ENCODE measurements at regions of chr13 and their contacts with region 1.

Region 1: GRCh38 chr13:51797664-51798488 is 6.1 kb downstream of the DHRS12 start:
- DNase-seq: peak; percentile 68
- H3K4me3 Mint-ChIP-seq: no peak overlapping the region
- H3K27ac Mint-ChIP-seq: no peak overlapping the region
- H3K4me1 Mint-ChIP-seq: peaks cover 39% of the 10 kb centered on the region
- H3K27me3 Mint-ChIP-seq: no peaks in the 10 kb centered on the region

Region 2: DNA sequence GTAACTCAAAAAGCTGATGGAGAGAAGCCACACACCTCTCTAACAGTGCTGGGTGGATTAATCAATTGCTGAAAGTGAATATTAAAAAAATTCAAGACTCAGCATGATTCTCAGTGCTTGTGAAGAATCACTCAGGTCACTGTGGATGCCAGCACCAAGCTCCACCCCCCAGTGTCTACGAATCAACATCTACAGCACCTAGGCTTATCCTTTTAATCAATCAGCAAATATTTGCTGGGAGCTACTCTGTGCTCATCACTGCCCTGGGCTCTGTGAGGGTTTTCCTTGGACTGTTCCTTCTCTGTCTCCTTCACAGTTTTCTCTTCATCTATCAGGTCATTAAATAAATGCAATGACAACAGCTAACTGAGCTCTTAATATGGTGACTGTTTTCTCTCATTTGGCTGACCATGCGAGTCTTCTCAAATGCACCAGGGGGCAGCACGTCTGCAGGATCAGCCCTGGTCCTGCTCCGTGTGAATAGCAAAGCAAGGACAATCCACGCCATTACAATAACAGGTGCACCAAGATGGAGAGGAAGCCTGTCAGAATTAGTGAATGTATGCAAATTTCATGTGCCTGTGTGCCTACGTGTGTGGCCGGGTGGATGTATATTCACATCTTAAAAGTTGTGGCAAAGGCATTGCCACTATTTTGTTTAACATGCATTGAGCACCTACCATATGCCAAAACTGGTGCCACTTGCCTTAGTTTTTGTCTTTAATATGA is 672.2 kb before region 1 on chr13:
- CTCF ChIA-PET with region 1: interaction called, 47 read pairs
- POLR2A ChIA-PET with region 1: interaction called, 4 read pairs
- DNase-seq: peak; percentile 60
- H3K4me3 Mint-ChIP-seq: no peak overlapping the region
- H3K27ac Mint-ChIP-seq: no peak overlapping the region
- H3K4me1 Mint-ChIP-seq: peaks cover 15% of the 10 kb centered on the region
- H3K27me3 Mint-ChIP-seq: peaks cover 27% of the 10 kb centered on the region

Region 3: GRCh38 chr13:51435002-51435578 is 362.8 kb before region 1 on chr13:
- CTCF ChIA-PET with region 1: interaction called, 63 read pairs
- POLR2A ChIA-PET with region 1: interaction called, 4 read pairs
- DNase-seq: no peak
- H3K4me3 Mint-ChIP-seq: no peak overlapping the region
- H3K27ac Mint-ChIP-seq: no peak overlapping the region
- H3K4me1 Mint-ChIP-seq: peaks cover 14% of the 10 kb centered on the region
- H3K27me3 Mint-ChIP-seq: no peaks in the 10 kb centered on the region

Region 4: GRCh38 chr13:51444922-51445321 is 353.0 kb before region 1 on chr13:
- CTCF ChIA-PET with region 1: interaction called, 50 read pairs
- POLR2A ChIA-PET with region 1: interaction called, 82 read pairs
- DNase-seq: no peak
- H3K4me3 Mint-ChIP-seq: no peak overlapping the region
- H3K27ac Mint-ChIP-seq: no peak overlapping the region
- H3K4me1 Mint-ChIP-seq: peaks cover 11% of the 10 kb centered on the region
- H3K27me3 Mint-ChIP-seq: no peaks in the 10 kb centered on the region

Region 5: DNA sequence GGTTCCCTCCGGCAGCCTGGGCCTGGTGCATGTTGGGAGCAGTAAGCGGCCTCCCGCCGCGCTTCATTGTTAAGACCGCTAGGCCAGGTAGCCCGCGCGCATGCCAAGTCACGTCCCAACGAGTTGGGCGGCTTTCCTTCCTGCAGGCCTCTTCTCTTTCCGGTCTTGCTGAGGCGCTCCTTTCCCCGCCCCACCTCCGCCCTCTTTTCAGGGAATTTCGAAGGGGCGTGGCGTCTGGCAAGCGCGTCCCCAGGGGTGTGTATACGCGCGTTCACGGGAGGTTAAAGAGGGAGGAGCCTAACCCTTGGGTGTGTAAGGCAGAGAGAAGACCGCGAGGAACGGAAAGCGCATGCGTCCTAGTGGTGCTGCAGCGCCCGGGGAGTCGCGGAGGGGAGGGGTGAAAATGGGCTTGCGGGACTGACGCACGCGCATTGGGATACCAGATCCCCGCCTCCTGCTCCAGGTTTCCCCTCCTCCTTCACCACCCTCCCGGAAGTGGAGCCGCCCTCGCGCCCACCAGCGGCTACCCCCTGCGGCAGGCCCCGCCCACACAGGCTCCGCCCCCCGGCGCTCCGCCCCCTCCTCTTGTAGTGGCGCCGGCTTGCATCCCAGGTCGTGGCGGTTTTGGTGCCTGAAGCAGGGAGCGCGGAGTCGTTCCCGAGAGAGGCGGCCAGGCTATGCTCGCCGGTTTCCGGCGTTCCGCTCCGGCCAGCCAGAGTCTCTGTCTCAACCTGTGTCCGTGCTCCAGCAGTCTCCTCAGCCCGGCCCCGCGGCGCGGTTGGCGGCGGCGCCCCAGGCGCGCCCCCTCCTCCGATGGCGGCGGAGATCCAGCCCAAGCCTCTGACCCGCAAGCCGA is 213.8 kb before region 1 on chr13 and contains the start of gene WDFY2:
- CTCF ChIA-PET with region 1: interaction called, 25 read pairs
- POLR2A ChIA-PET with region 1: interaction called, 7 read pairs
- DNase-seq: peak; percentile 99
- H3K4me3 Mint-ChIP-seq: peak within 1 kb of the TSS; percentile 86
- H3K27ac Mint-ChIP-seq: peak within 1 kb of the TSS; percentile 93
- H3K4me1 Mint-ChIP-seq: peaks cover 44% of the 10 kb centered on the region
- H3K27me3 Mint-ChIP-seq: peaks cover 7% of the 10 kb centered on the region
- total RNA-seq, gene WDFY2: 12.2 to 14.1 TPM

Region 6: GRCh38 chr13:51614350-51614786 is 183.5 kb before region 1 on chr13:
- CTCF ChIA-PET with region 1: interaction called, 11 read pairs
- POLR2A ChIA-PET with region 1: interaction called, 3 read pairs
- DNase-seq: peak; percentile 62
- H3K4me3 Mint-ChIP-seq: peak overlapping the region; percentile 71
- H3K27ac Mint-ChIP-seq: peak overlapping the region; percentile 90
- H3K4me1 Mint-ChIP-seq: peaks cover 20% of the 10 kb centered on the region
- H3K27me3 Mint-ChIP-seq: no peaks in the 10 kb centered on the region

Region 7: GRCh38 chr13:51785712-51786424 is 12.0 kb before region 1 on chr13:
- CTCF ChIA-PET with region 1: interaction called, 10 read pairs
- POLR2A ChIA-PET with region 1: interaction called, 3 read pairs
- DNase-seq: no peak
- H3K4me3 Mint-ChIP-seq: no peak overlapping the region
- H3K27ac Mint-ChIP-seq: no peak overlapping the region
- H3K4me1 Mint-ChIP-seq: peaks cover 15% of the 10 kb centered on the region
- H3K27me3 Mint-ChIP-seq: no peaks in the 10 kb centered on the region

Measured in activated CD4-positive, alpha-beta memory T cell treated with anti-CD3 and anti-CD28 coated beads, Interleukin-2, amount 10 ng/mL, durations not matched to agents 7 days and 5 days (primary cell).